ENCODE measurements at regions of chr12 and their contacts with region 1.

Region 1: DNA sequence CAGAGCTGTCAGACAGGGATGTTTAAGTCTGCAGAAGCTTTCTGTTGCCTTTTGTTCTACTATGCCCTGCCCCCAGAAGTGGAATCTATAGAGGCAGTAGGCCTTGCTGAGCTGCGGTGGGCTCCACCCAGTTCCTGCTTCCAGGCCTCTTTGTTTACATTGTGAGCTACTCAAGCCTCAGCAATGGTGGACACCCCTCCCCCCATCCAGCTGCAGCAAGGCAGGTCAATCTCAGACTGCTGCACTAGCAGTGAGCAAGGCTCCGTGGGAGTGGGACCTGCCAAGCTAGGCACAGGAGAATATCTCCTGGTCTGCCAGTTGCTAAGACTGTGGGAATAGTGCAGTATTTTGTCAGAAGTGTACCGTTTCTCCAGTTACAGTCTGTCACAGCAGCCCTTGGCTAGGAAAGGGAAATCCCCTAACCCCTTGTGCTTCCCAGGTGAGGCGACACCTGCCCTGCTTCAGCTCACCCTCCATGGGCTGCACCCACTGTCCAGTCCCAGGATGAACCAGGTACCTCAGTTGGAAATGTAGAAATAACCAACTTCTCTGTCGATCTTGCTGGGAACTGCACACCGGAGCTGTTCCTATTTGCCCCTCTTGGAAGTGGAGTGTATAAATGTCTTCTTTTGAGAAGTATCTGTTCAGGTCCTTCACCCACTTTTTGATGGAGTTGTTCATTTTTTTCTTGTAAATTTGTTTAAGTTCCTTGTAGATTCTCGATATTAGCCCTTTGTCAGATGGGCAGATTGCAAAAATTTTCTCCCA is 213.5 kb upstream of the SLC38A2 start:
- DNase-seq: peak; percentile 30 to 57
- ATAC-seq: peak in 2 of 3 donors; percentile 50 to 54
- H3K4me3 ChIP-seq: no peak overlapping the region
- H3K4me3 Mint-ChIP-seq: peak overlapping the region; percentile 38
- H3K27ac ChIP-seq: peak overlapping the region; percentile 39
- H3K27ac Mint-ChIP-seq: peak overlapping the region; percentile 54 to 60
- H3K4me1 ChIP-seq: peaks cover 12% of the 10 kb centered on the region
- H3K4me1 Mint-ChIP-seq: peaks cover 84 to 86% of the 10 kb centered on the region in 2 donors
- H3K27me3 ChIP-seq: no peaks in the 10 kb centered on the region
- H3K27me3 Mint-ChIP-seq: no peaks in the 10 kb centered on the region
- CTCF ChIP-seq: no peak

Region 2: DNA sequence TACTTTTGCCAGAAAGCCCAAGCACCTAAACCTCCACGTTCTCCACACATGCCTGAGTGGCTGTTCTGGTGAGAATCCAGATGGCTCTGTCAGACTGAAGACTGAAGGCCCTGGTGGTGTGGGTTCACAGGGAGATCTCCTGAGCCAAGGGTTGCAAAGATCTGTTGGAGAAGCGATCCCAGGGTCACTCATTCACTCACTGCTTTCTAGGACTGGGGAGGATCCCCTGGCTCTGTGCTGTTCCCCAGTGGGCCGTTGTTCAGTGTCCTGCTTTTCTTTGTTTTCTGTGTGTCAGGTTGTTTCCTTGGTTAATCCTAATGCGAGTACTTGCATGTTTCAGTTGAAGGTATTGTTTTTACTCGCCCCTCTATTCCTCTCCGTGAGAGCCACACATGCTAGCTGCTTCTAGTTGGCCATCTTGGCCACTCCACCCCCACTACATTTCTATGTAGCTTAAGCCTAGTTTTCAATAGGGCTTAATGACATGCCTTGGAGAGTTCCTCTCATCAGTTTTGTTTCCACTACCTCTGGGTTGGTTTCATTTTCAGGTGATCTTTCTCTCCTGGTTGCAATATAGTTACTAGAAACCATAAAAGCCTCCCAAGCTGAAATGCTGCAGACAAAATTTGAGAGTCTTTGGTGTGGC is 69.0 kb before region 1 on chr12:
- intact Hi-C with region 1: no loop called
- DNase-seq: peak in 1 of 2 donors; percentile 21
- ATAC-seq: peak in 1 of 3 donors; percentile 46
- H3K4me3 ChIP-seq: no peak overlapping the region
- H3K4me3 Mint-ChIP-seq: peak overlapping the region; percentile 19
- H3K27ac ChIP-seq: peak overlapping the region; percentile 11
- H3K27ac Mint-ChIP-seq: peak overlapping the region; percentile 60
- H3K4me1 ChIP-seq: peaks cover 13% of the 10 kb centered on the region
- H3K4me1 Mint-ChIP-seq: peaks cover 60 to 71% of the 10 kb centered on the region in 2 donors
- H3K27me3 ChIP-seq: no peaks in the 10 kb centered on the region
- H3K27me3 Mint-ChIP-seq: no peaks in the 10 kb centered on the region
- CTCF ChIP-seq: no peak

Region 3: DNA sequence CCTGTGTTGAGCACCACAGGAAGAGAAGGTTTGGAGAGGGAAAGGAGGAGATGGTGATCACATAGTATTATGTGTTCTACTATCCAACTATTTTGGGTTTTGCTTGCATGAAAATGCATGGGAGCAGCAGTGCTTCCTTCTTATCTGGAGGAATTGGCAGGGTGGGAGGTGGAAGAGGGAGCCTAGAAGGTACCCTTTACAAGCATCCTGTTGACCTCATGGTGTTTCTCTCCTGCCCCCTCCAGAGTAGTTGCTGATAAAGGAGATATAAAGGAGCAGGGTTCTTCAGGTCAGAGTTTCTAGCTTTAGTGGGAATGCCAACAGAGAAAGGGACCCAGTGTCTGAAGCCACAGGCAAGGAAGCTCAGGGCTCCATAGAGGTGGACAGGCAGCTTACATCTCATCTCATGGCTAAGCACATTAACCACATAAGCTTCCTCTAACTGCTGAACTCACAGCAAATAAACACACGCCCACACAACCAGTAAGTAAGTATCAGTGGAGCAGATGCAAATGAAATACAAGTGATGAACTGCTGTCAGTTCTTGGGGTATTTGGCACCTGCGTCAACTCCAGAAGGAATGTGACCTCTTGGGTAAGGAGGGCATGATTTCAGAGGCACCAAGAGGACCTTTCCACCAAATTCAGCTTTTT is 39.3 kb before region 1 on chr12:
- intact Hi-C with region 1: loop called (anchors 5 kb)
- DNase-seq: peak in 1 of 2 donors; percentile 26
- ATAC-seq: peak; percentile 81 to 97 (median 90)
- H3K4me3 ChIP-seq: no peak overlapping the region
- H3K4me3 Mint-ChIP-seq: peak overlapping the region; percentile 80
- H3K27ac ChIP-seq: peak overlapping the region; percentile 62
- H3K27ac Mint-ChIP-seq: peak overlapping the region; percentile 84 to 92
- H3K4me1 ChIP-seq: peaks cover 28% of the 10 kb centered on the region
- H3K4me1 Mint-ChIP-seq: peaks cover 80 to 89% of the 10 kb centered on the region in 2 donors
- H3K27me3 ChIP-seq: no peaks in the 10 kb centered on the region
- H3K27me3 Mint-ChIP-seq: no peaks in the 10 kb centered on the region
- CTCF ChIP-seq: no peak

Region 4: DNA sequence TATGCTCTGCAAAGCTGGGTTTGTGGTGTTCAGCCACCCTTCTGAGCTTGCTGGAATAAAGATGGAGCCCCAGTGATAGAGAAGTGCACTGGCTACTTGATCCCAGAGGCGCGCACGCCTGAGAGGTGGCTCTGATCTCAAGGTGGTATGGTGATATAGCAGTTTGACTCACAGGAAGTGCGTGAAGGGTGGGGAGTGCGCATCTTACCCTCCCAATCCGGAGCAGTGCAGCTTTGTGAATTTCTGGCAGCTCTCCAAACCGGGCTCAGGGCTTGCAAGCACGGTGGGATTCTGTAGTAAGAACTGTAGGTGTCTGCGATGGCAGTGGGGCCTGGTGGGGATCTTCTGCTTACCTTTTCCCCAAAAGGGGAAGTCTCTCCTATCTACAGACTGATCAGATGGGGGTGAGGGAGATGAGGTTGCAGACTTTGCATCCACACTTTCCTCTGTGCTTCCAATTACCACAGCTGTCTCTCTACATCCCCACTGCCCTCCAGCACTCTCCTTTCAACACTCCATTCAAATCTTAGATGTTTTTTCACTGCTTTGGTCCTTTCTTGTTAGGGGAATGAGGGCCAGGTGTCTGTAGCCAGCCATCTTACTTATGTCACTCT is 16.1 kb before region 1 on chr12:
- intact Hi-C with region 1: loop called (anchors 2 kb)
- DNase-seq: no peak
- ATAC-seq: no peak
- H3K4me3 ChIP-seq: no peak overlapping the region
- H3K4me3 Mint-ChIP-seq: no peak overlapping the region
- H3K27ac ChIP-seq: no peak overlapping the region
- H3K27ac Mint-ChIP-seq: no peak overlapping the region
- H3K4me1 ChIP-seq: no peaks in the 10 kb centered on the region
- H3K4me1 Mint-ChIP-seq: peaks cover 22 to 31% of the 10 kb centered on the region in 2 donors
- H3K27me3 ChIP-seq: no peaks in the 10 kb centered on the region
- H3K27me3 Mint-ChIP-seq: no peaks in the 10 kb centered on the region
- CTCF ChIP-seq: no peak

Region 5: GRCh38 chr12:46617167-46617566 is 31.1 kb after region 1 on chr12:
- intact Hi-C with region 1: no loop called
- DNase-seq: no peak
- ATAC-seq: no peak
- H3K4me3 ChIP-seq: no peak overlapping the region
- H3K4me3 Mint-ChIP-seq: no peak overlapping the region
- H3K27ac ChIP-seq: no peak overlapping the region
- H3K27ac Mint-ChIP-seq: no peak overlapping the region
- H3K4me1 ChIP-seq: no peaks in the 10 kb centered on the region
- H3K4me1 Mint-ChIP-seq: peaks cover 14 to 22% of the 10 kb centered on the region in 2 donors
- H3K27me3 ChIP-seq: no peaks in the 10 kb centered on the region
- H3K27me3 Mint-ChIP-seq: no peaks in the 10 kb centered on the region
- CTCF ChIP-seq: no peak